ENCODE measurements at regions of chrX and their contacts with region 1.

Region 1: DNA sequence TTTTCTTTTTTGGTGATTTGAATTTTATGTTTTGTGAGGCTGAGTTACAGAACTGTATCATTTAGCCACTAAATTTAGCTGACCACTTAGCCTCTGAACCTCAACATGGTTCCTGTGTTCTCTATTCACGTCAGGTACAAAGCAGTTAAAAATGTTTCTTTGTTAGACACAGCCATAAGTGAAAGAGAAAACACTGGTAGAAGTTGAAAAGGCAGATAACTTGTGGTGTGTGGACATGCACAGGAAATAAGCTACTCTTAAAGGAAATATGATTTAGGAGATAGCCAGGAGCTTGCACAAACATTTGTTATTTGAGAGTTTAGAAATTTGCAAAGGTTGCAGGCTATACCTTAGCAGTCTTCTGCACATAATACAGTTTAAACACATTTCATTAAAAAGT is 171.0 kb upstream of the RPS6KA3 start:
- DNase-seq: no peak
- H3K4me3 ChIP-seq: no peak overlapping the region
- CTCF ChIP-seq: no peak
- POLR2A ChIP-seq: no peak

Region 2: DNA sequence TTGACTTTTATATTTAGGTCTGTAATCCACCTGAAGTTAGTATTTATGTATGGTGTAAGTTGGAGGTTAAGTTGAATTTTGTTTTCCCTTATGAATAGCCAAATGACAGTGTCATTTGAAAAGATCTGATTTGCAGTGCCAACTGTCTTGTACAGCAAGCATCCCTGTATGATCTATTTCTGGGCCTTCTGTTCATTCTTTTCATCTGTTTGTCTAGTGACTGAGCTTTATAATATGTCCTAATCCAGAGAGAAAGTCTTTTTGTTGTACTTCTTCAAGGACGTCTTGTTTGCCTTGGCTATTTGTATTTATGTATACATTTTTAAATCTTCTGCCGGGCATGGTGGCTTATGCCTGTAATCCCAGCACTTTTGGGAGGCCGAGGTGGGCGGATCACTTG is 1972.6 kb before region 1 on chrX:
- intact Hi-C with region 1: no loop called
- DNase-seq: no peak
- H3K4me3 ChIP-seq: no peak overlapping the region
- CTCF ChIP-seq: no peak
- POLR2A ChIP-seq: no peak

Region 3: DNA sequence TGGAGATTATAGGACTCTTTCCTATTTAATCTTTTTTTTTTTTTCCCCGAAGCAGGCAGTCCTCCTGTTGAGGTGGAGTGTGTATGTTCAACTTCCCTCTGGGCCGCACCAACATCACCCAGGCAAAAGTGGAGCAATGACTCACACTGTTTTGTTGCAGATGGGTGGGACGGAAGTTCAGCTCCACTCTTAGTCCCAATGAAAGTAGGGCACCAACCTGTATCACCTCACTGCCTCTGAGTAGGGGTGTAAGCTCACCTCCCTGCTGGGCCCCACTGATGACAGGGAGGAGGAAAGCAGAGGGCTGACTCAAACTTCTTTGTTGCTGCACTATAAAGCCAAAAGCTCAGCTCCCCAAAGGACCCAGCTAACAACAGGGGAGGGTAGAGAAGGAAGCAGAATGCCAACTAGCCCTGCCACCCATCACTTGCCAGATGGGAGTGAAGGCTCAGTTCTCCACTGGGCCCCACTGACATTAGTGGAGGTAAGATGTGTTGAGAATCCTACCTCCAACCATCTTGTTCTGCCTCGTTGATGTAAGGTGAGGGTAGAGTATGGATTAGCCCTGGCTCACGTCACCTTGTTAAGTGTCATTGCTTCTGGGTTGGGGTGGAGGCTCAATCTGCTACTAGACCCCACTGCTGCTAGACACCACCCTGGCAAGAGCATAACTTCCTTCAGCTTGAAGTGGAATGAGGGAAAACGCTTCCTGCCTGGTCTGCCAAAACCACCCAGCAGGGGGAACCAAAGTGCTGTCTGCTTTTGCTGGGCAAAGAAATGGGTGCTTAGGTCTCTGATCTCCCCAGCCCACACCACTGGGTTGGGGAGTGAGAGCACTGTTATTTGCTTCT is 185.1 kb before region 1 on chrX:
- intact Hi-C with region 1: loop called (anchors 10 kb)
- DNase-seq: peak; percentile 22 to 91
- H3K4me3 ChIP-seq: no peak overlapping the region
- CTCF ChIP-seq: no peak
- POLR2A ChIP-seq: no peak